Stomach (tissue), 19 donors: ENCODE measurements at regions of chr10 and their contacts with region 1.

Region 1: DNA sequence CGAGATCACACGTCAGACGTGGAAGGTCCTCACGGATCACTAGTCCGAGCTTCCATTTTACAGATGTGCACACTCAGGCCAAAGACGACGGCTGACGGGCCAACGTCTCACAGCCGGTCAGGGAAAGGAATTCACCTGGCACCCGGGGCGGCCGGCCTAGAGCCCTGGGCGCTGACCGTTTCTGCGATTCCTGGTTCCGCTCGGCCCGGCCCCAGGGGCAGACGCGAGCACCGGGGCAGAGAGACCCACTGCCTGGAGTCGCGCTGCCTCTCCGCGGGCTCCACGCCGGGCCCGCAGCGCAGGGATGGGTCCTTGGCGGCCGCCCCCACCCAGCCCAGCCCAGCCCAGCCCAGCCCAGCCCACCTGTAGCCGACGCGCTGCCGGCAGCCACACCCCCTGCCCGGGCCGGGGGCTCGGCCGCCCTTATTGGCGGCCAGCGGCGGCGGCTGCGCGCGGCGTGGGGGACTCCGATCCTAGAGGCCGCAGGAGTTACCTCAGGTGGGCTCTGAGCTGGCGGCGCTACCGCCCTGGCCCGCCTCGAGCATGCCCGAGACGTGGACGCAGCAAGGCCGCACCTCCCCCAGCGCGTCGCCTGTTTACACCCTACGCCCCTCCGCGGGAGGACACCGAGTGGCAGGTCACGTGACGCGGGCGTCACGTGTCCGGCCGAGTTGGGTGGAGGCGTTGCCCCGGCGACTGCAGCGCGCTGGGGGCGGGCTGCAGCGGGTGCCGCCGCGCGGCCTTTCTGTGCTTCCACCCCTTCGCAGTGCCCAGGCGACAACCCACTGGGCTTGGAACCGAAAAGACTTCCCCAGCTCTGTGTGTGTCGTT is 78.1 kb downstream of the ZFAND4 start:
- DNase-seq: peak; percentile 94 to 97
- H3K4me3 ChIP-seq: peak overlapping the region; percentile 73 to 94 (median 81)
- H3K27ac ChIP-seq: peak overlapping the region; percentile 65 to 87 (median 83)
- H3K4me1 ChIP-seq: peaks cover 12 to 36% (median 21%) of the 10 kb centered on the region in 4 donors
- H3K27me3 ChIP-seq: peaks cover 0 to 4% (median 0%) of the 10 kb centered on the region in 3 donors
- CTCF ChIP-seq: no peak
- EP300 ChIP-seq: no peak
- POLR2A ChIP-seq: no peak

Region 2: DNA sequence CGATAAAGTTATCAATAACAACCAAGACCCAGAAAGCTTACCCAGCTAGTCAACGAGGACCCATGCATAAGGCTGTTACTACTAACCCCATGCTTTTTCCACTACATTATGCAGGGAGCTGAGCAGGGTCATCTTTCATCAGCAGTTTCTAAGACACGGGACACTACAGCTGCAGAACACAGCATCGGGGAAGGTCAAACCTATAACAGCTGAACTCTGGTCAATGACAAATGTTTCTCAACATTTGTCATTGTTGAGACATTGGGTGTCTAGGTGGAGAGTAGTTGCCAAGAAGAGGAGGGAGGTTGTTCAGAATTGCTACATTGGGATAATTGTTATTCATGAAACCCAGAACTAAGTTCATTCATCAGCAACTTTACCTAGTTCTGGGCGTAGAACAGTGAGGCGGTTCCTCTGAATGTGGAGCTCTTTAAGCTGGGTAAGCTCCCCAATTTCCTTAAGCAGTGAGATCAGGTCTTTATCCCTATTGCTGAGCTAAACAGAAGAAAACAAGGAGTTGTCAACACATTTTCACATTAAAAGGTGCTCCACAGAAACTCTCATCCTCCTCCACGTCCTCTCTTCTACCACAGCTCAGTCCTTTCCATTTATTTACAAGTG is 488.1 kb before region 1 on chr10:
- intact Hi-C with region 1: no loop called
- DNase-seq: no peak
- H3K4me3 ChIP-seq: no peak overlapping the region
- H3K27ac ChIP-seq: no peak overlapping the region
- H3K4me1 ChIP-seq: no peaks in the 10 kb centered on the region
- H3K27me3 ChIP-seq: peaks cover 0 to 58% (median 6%) of the 10 kb centered on the region in 3 donors
- CTCF ChIP-seq: no peak
- EP300 ChIP-seq: no peak
- POLR2A ChIP-seq: no peak

Region 3: GRCh38 chr10:45280113-45280760 is 314.3 kb before region 1 on chr10:
- intact Hi-C with region 1: no loop called
- DNase-seq: peak; percentile 17 to 45
- H3K4me3 ChIP-seq: no peak overlapping the region
- H3K27ac ChIP-seq: peak overlapping the region; percentile 23 to 62 (median 38)
- H3K4me1 ChIP-seq: peaks cover 6 to 19% (median 16%) of the 10 kb centered on the region in 4 donors
- H3K27me3 ChIP-seq: no peaks in the 10 kb centered on the region
- CTCF ChIP-seq: no peak
- EP300 ChIP-seq: no peak
- POLR2A ChIP-seq: no peak

Region 4: GRCh38 chr10:45470098-45471012 is 124.1 kb before region 1 on chr10:
- intact Hi-C with region 1: loop called (anchors 10 kb)
- DNase-seq: peak in 1 of 2 donors; percentile 50
- H3K4me3 ChIP-seq: no peak overlapping the region
- H3K27ac ChIP-seq: peak overlapping the region in 3 of 5 donors; percentile 5 to 60 (median 5)
- H3K4me1 ChIP-seq: peaks cover 19 to 39% (median 27%) of the 10 kb centered on the region in 4 donors
- H3K27me3 ChIP-seq: no peaks in the 10 kb centered on the region
- CTCF ChIP-seq: no peak
- EP300 ChIP-seq: no peak
- POLR2A ChIP-seq: no peak